ENCODE measurements at regions of chr15 and their contacts with region 1.

Region 1: DNA sequence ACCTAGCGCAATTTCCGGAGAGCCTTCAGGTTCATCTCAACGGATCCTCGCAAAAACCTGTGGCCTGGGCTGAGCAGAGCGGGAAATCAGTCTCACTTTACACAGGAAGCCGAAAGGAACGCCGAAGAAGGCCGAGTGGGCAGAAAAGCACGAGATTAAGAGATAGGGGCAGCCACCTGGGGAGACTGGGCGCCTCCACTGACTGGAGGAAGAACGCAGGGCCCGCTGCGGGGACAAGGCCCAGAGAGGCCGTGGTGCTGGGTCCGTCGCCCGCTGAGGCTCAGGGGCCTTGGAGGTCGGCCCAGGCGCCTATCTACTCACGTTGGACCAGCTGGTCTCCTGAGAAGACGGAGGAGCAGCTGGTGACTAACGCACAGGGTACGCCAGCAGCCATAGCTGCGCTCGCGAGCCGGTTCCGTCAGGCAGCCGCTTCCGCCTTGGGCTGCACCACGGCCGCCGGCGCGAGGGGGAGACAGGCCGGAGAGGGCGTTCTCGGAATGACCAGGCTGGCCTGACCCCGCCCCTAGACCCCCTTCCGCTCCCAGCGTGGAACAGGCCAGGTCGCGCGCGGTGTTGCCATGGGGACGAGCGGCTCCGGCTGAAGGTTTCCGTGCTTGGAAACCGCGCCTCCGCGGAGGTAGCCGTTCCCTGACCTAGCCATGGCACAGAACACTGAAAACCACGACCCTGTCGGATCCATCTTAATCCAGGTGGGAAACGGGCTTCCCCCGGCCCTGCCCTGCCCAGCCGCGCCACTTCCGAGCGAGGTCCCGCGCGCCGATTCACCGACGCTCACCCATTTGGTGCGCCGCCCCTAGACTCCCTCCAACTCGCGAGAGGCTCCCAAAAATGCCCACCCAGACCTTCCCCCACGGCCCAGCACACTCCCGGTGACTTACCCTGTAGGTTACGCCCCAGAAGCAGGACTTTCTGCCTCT is at the starts of genes AAGAB and IQCH:
- DNase-seq: peak; percentile 99
- ATAC-seq: peak; percentile 99 to 100
- total RNA-seq, gene AAGAB: 18.0 to 26.9 TPM
- total RNA-seq, gene IQCH: 0.53 to 1.1 TPM

Region 2: DNA sequence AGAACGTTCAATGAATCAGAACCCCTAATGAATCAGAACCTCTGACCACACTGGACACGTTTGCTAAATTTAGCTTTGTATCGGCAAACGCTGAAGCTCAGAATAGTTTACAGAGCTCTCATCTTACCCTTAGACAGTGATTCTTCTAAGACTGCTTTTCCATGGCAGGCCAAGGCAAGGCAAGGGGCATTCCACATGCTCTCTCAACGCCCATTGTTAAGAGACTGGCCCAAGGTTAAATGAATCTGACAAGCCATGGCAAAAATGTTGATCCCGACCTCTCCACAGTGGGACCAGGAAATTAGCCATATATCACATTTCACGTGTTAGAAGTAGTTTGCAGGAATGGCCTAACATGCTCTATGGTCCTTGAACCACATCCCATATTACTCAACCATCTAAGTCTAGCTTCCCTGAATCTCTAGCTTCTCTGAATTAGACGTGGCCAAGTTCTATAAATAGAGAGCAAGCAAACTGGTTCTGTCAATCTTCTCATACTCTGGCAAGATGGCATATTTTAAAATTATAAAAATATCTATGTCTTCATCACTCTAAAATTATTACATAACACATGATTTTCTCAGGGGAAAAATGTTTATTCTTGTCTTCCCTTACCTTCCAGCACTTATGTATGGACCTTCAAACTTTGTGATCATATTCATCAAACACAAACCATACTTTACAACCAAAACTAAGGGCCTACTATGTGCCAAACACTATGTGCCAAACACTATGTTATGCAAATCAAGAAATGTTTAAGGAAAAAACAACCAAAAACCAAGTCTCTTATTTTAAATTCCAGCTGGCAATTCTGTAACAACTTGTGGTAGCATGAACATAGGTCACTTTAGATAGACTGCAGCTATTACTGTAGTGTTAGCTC is 54.4 kb before region 1 on chr15:
- intact Hi-C with region 1: loop called in 1 of 2 experiments (anchors 10 kb)
- DNase-seq: no peak
- ATAC-seq: peak; percentile 37 to 69

Region 3: GRCh38 chr15:67564608-67565345 is 310.3 kb after region 1 on chr15:
- intact Hi-C with region 1: no loop called
- DNase-seq: no peak
- ATAC-seq: no peak